ENCODE measurements at regions of chr1 and their contacts with region 1.

Region 1: DNA sequence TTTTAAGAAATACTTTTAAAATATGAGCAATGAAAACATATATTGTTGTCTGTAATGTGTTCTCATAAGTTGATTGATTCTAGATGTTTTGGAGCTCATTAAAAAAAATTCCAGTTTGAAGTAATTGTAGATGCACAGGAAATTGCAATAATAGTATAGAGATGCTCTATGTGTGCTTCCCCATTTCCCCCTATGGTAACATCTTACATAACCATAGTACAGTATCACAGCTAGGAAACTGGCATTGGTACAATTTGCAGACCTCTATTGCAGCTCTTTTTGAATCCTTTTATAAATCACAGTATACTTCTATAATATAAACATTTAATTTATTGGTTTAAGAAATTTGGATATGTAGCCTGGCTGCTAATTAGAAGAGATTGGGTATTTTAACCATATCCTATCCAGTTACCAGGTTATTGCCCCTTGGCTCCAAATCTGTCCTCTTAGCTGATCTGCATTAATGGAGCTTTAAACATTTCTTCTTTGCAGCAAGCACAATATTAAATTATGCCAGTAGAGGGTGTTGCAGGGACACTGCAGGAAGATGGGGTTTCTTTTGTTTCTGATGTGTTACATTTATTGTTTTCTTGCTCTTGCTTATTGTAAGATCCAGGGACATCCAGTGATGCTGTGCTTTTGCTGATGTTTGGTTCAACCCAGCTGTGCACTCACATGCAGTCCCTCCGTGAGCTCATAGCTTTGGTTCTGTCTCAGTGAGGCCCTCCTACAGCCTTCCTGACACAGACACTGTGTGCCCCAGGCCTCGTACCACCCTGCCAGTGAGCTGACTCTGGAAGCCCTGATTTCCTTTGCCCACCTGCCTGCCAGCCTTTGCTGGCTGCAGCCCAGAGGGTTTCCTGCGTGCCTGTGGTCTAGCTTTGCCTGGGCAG is 103.3 kb downstream of the RABGAP1L start:
- DNase-seq: peak; percentile 80

Region 2: DNA sequence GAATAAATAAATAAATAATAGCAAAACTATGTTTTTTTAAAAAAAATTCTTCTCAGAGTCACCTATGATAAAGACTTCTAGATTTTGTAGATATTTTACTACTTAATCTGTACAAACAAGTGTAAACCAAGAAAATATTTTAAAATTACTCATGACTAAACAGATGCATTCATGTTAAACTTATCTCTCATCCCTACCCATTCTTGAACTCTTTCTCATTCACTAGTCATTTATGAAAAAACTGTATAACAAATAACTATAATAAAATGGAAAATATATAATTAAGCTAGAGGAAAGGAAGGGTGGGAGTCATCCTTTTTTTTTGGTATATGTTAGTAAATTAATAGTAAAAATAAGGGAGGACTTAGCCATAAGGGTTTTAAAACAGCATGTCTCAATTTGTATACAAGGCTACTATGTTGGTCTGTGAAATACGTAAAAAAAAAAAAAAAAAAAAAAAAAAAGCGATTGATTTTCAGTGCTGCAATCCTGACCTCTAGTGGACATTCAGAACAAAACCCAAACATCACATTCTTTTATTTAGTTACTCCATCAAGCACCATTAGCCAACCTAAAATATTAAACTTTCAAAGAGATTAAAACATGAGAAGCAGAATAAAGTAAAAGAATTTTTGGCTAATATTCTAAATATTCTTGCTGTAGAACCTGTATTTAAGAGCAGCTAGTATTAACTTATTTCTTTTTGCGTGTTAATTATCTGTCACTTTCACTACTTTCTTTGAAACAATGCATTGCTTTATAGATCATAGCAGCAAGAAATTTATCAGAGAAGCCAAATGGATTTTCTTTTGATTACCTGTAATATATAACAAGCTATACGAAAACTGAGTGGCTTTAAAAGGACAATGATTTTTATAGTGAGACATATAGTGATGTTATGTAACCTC is 481.3 kb after region 1 on chr1:
- in situ Hi-C with region 1: loop called (anchors 25 kb)
- DNase-seq: peak; percentile 70

Measured in SK-MEL-5 (cell line).